ENCODE measurements at regions of chr3 and their contacts with region 1.

Region 1: GRCh38 chr3:146334151-146334550 is 83.2 kb upstream of the PLSCR4 start:
- DNase-seq: no peak
- H3K4me3 ChIP-seq: no peak overlapping the region
- H3K27ac ChIP-seq: no peak overlapping the region
- H3K4me1 ChIP-seq: no peaks in the 10 kb centered on the region
- H3K27me3 ChIP-seq: no peaks in the 10 kb centered on the region
- CTCF ChIP-seq: peak in 1 of 3 experiments; percentile 21
- POLR2A ChIP-seq: no peak

Region 2: DNA sequence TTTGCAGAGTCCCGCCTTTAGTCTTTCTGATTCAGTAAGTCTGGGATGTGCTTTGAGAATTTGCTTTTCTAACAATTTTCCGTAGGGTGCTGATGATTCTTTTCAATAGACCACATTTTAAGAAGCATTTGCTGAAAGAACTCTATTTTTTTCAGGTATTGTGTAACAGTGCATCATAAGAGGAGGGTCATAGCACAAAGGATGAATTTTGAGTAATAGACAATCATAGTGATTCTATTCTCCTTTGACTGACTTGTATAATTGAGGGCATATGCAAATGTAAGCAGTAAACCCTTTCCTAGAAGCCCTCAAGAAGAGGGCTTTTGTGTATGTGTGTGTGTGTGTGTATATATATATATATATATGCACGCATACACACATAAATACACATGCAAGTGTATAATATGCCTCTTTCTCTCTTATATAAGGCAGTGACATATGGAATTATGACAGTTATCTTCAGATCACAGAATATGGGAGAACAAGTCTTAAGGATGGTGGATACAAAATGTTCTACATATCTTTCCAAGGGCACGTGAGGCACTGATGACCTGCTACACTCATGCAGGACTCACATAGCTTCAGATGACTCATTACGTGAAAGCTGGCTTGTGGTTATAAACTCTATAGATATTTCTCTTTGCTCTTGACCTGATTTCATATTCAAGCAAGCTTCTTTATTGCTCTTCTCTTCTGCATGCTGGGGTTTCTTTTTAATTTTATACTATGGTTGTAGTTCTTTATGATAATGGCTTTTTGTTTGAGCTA is 216.8 kb after region 1 on chr3:
- intact Hi-C with region 1: loop called (anchors 10 kb)
- DNase-seq: no peak
- H3K4me3 ChIP-seq: peak overlapping the region in 1 of 2 donors; percentile 8
- H3K27ac ChIP-seq: no peak overlapping the region
- H3K4me1 ChIP-seq: no peaks in the 10 kb centered on the region
- H3K27me3 ChIP-seq: no peaks in the 10 kb centered on the region
- CTCF ChIP-seq: no peak
- POLR2A ChIP-seq: no peak